ENCODE measurements at regions of chr15 and their contacts with region 1.

Region 1: DNA sequence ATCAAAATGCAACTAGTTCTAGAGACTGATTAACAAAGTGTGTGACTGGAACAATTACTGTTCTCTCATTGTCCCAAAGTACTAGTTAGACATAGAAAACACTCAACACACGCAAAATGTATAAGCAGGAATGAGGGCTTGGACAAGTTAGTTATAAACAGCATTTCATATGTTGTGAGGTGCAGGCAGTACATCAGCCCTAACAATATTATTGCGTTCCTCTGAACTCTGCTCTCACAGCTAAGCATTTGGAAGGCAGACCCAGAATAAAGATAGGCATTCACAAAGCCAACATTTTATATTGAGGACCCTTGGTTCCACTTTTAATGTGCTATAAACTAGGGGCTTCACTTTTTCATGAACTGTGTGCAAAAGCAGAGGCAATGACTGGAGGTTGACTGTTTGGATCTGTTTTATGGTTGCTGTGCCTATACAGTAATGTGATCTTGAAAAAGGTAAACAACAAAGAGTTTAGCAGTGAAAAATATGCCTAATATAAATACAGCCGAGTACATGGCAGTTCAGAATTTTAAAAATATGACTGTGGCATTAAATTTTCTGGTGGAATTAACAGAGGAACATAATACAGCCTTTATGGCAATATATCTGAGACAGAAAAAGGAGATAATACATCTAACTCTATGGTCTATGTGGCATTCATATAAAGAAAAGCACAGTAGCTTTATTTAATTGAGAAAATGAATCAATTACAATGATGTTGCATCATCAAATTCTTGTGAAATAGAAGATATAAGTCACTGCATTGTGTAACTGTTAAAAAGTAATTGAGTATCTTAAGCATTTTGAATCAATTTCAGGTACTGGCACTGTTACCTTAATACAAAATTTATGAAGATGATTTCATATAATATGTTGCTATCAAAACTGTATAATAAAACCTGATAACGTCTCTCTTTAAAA is 80.0 kb upstream of the SKOR1 start:
- DNase-seq: no peak
- H3K4me3 Mint-ChIP-seq: no peak overlapping the region
- H3K27ac Mint-ChIP-seq: no peak overlapping the region
- H3K4me1 Mint-ChIP-seq: peaks cover 38% of the 10 kb centered on the region
- H3K27me3 Mint-ChIP-seq: no peaks in the 10 kb centered on the region

Region 2: GRCh38 chr15:67762610-67763368 is 17.5 kb after region 1 on chr15:
- intact Hi-C with region 1: loop called (anchors 2 kb)
- DNase-seq: peak; percentile 39
- H3K4me3 Mint-ChIP-seq: no peak overlapping the region
- H3K27ac Mint-ChIP-seq: peak overlapping the region; percentile 29
- H3K4me1 Mint-ChIP-seq: peaks cover 56% of the 10 kb centered on the region
- H3K27me3 Mint-ChIP-seq: peaks cover 3% of the 10 kb centered on the region

Measured in activated T-helper 2 cell treated with anti-CD3 and anti-CD28 coated beads, Interferon-gamma antibody, Interleukin-2, Interleukin-4, amounts not matched to agents 10 μg/mL and 5 μg/mL and 100 μg/mL, durations not matched to agents 14 hours and 24 hours and 36 hours (primary cell).